ENCODE measurements at regions of chr4 and their contacts with region 1.

Region 1: GRCh38 chr4:161948026-161948770 is 215.6 kb downstream of the FSTL5 start:
- DNase-seq: no peak
- ATAC-seq: no peak
- H3K4me3 ChIP-seq: no peak overlapping the region
- H3K4me3 Mint-ChIP-seq: no peak overlapping the region
- H3K27ac ChIP-seq: no peak overlapping the region
- H3K27ac Mint-ChIP-seq: no peak overlapping the region
- H3K4me1 ChIP-seq: no peaks in the 10 kb centered on the region
- H3K4me1 Mint-ChIP-seq: no peaks in the 10 kb centered on the region
- H3K27me3 ChIP-seq: no peaks in the 10 kb centered on the region
- H3K27me3 Mint-ChIP-seq: no peaks in the 10 kb centered on the region

Region 2: DNA sequence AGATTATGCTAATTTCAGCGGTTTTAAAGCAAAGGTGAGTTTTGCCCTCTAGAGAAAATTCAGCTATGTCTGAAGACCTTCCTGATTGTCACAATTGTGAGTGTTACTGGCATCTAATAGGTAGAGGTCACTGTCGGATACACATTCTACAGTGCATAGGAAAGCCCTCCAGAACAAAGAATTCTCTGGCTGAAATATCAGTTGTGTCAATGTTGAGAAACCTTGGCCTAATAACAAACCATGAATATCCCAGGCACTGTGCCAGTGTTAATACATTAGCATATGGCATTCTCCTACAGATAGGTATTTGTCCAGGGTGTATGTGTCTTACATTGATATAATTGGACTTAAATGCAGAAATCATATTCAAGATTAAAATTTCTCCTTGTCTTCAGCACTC is 78.7 kb before region 1 on chr4:
- CTCF ChIA-PET with region 1: no interaction called
- POLR2A ChIA-PET with region 1: no interaction called
- DNase-seq: no peak
- ATAC-seq: no peak
- H3K4me3 ChIP-seq: no peak overlapping the region
- H3K4me3 Mint-ChIP-seq: no peak overlapping the region
- H3K27ac ChIP-seq: no peak overlapping the region
- H3K27ac Mint-ChIP-seq: no peak overlapping the region
- H3K4me1 ChIP-seq: no peaks in the 10 kb centered on the region
- H3K4me1 Mint-ChIP-seq: no peaks in the 10 kb centered on the region
- H3K27me3 ChIP-seq: no peaks in the 10 kb centered on the region
- H3K27me3 Mint-ChIP-seq: no peaks in the 10 kb centered on the region

Region 3: DNA sequence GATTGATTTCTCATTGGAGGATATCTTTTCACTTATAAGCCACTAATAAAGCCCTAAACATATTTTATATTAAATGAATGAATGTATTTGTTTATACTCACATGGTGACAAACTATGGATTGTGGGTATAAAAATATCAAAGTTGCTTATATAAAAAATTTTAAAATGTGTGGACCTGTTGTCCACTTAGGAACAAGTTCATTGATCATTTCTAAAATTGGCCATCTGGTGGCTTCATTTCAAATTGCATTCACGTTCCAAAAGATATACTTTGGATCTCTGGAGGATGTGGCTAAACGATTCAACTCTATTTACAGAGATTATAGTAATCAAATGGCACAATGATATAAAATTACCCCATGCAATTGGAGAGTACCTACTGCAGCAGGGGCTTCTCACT is 183.1 kb after region 1 on chr4:
- CTCF ChIA-PET with region 1: interaction called in 1 of 2 experiments, 12 read pairs
- POLR2A ChIA-PET with region 1: no interaction called
- DNase-seq: no peak
- ATAC-seq: no peak
- H3K4me3 ChIP-seq: no peak overlapping the region
- H3K4me3 Mint-ChIP-seq: no peak overlapping the region
- H3K27ac ChIP-seq: no peak overlapping the region
- H3K27ac Mint-ChIP-seq: no peak overlapping the region
- H3K4me1 ChIP-seq: no peaks in the 10 kb centered on the region
- H3K4me1 Mint-ChIP-seq: no peaks in the 10 kb centered on the region
- H3K27me3 ChIP-seq: no peaks in the 10 kb centered on the region
- H3K27me3 Mint-ChIP-seq: no peaks in the 10 kb centered on the region